ENCODE measurements at regions of chr17 and their contacts with region 1.

Region 1: GRCh38 chr17:43760254-43760852 is 1.8 kb upstream of the SOST start:
- DNase-seq: peak; percentile 92 to 95
- ATAC-seq: peak; percentile 85 to 95 (median 92)
- H3K4me3 ChIP-seq: no peak overlapping the region
- H3K27ac ChIP-seq: no peak overlapping the region
- H3K4me1 ChIP-seq: peaks cover 2 to 20% (median 5%) of the 10 kb centered on the region in 9 donors
- H3K27me3 ChIP-seq: peaks cover 0 to 28% (median 25%) of the 10 kb centered on the region in 7 donors
- CTCF ChIP-seq: peak; percentile 97 to 100 (median 99)

Region 2: GRCh38 chr17:43694077-43694870 is 66.1 kb before region 1 on chr17:
- intact Hi-C with region 1: loop called (anchors 1 to 2 kb)
- DNase-seq: peak; percentile 61 to 79
- ATAC-seq: peak; percentile 63 to 87 (median 80)
- H3K4me3 ChIP-seq: no peak overlapping the region
- H3K27ac ChIP-seq: no peak overlapping the region
- H3K4me1 ChIP-seq: peaks cover 3 to 17% (median 14%) of the 10 kb centered on the region in 9 donors
- H3K27me3 ChIP-seq: no peaks in the 10 kb centered on the region
- CTCF ChIP-seq: peak; percentile 74 to 98 (median 95)

Measured in heart right ventricle (tissue), 16 donors.